AG04450 (cell line): ENCODE measurements at regions of chr13 and their contacts with region 1.

Region 1: GRCh38 chr13:65638572-65639168 is 1591.5 kb downstream of the PCDH9 start:
- DNase-seq: peak; percentile 34
- H3K4me3 ChIP-seq: no peak overlapping the region
- H3K27ac ChIP-seq: no peak overlapping the region
- H3K27me3 ChIP-seq: no peaks in the 10 kb centered on the region
- CTCF ChIP-seq: peak; percentile 88

Region 2: DNA sequence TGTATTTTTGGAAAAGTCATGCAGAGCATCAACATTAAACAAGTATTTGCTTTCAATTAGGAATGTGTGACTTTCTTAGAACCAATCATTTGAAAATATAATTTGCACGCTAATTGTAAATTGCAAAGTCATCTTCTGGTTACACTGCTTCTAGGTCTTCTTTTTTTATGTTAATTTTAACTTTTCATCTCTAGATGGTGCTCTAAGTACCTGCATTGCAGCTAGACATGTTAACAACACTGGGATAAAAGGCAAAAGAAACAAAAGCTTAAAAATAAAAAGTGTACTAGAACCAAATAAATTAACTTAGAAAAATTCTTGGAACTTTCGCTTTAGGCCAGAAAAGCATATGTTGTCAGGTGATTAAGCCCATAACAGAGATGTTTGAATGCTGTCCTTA is 1166.8 kb before region 1 on chr13:
- CTCF ChIA-PET with region 1: interaction called, 42 read pairs
- POLR2A ChIA-PET with region 1: no interaction called
- DNase-seq: peak; percentile 11
- H3K4me3 ChIP-seq: no peak overlapping the region
- H3K27ac ChIP-seq: no peak overlapping the region
- H3K27me3 ChIP-seq: no peaks in the 10 kb centered on the region
- CTCF ChIP-seq: peak; percentile 67

Region 3: DNA sequence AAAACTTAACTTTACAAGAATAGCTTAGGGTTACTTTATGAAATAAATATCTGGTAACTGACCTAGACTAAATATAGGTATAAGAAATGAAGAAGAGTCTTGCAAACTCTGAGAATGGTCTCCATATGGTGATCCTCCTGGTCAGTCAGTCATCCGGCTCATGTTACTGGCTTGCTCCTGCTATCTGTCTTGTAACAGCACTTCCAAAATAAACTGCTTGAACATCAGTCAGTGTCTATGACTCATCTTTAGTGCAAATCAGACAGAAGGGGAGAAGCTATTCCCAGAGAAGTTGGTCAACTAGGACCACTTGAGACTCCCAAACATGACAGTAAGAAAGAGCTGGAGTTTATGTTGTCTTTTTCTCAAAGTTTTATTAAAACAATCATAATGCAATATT is 40.6 kb after region 1 on chr13:
- CTCF ChIA-PET with region 1: interaction called, 15 read pairs
- POLR2A ChIA-PET with region 1: no interaction called
- DNase-seq: no peak
- H3K4me3 ChIP-seq: no peak overlapping the region
- H3K27ac ChIP-seq: no peak overlapping the region
- H3K27me3 ChIP-seq: no peaks in the 10 kb centered on the region
- CTCF ChIP-seq: no peak